Dorsolateral prefrontal cortex (tissue), 120 donors: ENCODE measurements at regions of chr5 and their contacts with region 1.

Region 1: GRCh38 chr5:176447982-176448608 is at the start of gene FAF2:
- DNase-seq: peak; percentile 90 to 96 (median 94)
- H3K4me3 ChIP-seq: peak within 1 kb of the TSS; percentile 62 to 99 (median 93)
- H3K27ac ChIP-seq: peak within 1 kb of the TSS; percentile 68 to 98 (median 95)
- H3K27me3 ChIP-seq: no peaks in the 10 kb centered on the region
- CTCF ChIP-seq: peak; percentile 78 to 100 (median 97)
- total RNA-seq, gene FAF2: 23.5 to 42.0 (median 33.9) TPM

Region 2: GRCh38 chr5:176361437-176362232 is 86.5 kb before region 1 on chr5 and contains the start of gene KIAA1191:
- intact Hi-C with region 1: loop called in 1 of 2 experiments (anchors 2 kb)
- DNase-seq: peak; percentile 90 to 97 (median 95)
- H3K4me3 ChIP-seq: peak within 1 kb of the TSS; percentile 73 to 100 (median 95)
- H3K27ac ChIP-seq: peak within 1 kb of the TSS; percentile 15 to 93 (median 82)
- H3K27me3 ChIP-seq: no peaks in the 10 kb centered on the region
- CTCF ChIP-seq: peak in 52 of 56 donors; percentile 14 to 66 (median 43)
- total RNA-seq, gene KIAA1191: 94.9 to 173 (median 136) TPM

Region 3: GRCh38 chr5:176388444-176389134 is 59.5 kb before region 1 on chr5 and contains the starts of genes HIGD2A and NOP16:
- intact Hi-C with region 1: loop called in 1 of 2 experiments (anchors 2 kb)
- DNase-seq: peak; percentile 93 to 99 (median 98)
- H3K4me3 ChIP-seq: peak within 1 kb of the TSS; percentile 61 to 99 (median 88)
- H3K27ac ChIP-seq: peak within 1 kb of the TSS; percentile 76 to 99 (median 96)
- H3K27me3 ChIP-seq: no peaks in the 10 kb centered on the region
- CTCF ChIP-seq: peak in 23 of 56 donors; percentile 2 to 43 (median 22)
- total RNA-seq, gene HIGD2A: 58.3 to 114 (median 80.1) TPM
- total RNA-seq, gene NOP16: 7.6 to 21.5 (median 13.1) TPM

Region 4: DNA sequence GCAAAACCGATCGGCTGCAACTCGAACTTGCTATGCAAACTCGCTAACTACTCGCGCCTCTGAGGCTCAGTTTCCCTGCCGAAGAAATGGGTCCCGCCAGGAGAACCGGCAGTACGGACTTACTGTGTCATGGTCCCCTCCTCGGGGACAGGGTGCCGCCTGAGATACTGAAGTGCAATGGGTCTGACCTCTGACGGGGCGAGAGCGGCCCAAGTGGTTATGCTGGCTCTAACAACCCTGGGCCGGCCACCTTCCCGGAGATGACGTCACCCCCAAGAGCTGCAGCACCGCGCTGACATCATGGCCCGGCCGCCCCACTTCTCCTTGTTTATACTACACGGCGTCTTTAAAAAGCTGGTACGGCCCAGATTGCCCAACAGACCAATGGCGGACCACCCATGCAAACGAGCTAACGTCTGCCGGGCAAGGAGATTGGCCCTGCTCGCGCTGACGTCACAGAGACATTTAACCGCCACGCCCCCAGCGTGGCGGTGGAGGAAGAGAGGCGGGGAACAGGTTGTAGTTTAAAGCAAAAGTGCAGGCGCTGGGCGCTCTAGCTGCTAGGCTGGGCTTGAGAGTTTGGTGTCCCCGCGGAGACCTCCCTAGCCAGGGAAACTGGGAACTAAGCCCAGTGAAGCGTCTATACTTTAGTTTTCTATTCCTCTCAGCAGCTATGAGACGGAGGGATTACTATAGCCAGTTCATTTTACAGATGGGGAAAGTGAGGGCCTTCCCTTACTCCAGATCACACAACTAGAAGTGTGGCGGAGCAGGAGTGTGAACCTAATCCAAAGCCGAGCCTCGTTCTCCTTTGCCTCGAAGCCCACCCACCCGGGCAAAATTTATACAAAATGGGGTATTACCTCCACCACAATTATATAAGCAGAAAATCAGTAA is 89.8 kb after region 1 on chr5:
- intact Hi-C with region 1: loop called (anchors 1 to 2 kb)
- DNase-seq: peak; percentile 98 to 100 (median 100)
- H3K4me3 ChIP-seq: peak overlapping the region; percentile 72 to 100 (median 92)
- H3K27ac ChIP-seq: peak overlapping the region; percentile 74 to 100 (median 98)
- H3K27me3 ChIP-seq: no peaks in the 10 kb centered on the region
- CTCF ChIP-seq: peak in 10 of 56 donors; percentile 12 to 38 (median 14)

Region 5: DNA sequence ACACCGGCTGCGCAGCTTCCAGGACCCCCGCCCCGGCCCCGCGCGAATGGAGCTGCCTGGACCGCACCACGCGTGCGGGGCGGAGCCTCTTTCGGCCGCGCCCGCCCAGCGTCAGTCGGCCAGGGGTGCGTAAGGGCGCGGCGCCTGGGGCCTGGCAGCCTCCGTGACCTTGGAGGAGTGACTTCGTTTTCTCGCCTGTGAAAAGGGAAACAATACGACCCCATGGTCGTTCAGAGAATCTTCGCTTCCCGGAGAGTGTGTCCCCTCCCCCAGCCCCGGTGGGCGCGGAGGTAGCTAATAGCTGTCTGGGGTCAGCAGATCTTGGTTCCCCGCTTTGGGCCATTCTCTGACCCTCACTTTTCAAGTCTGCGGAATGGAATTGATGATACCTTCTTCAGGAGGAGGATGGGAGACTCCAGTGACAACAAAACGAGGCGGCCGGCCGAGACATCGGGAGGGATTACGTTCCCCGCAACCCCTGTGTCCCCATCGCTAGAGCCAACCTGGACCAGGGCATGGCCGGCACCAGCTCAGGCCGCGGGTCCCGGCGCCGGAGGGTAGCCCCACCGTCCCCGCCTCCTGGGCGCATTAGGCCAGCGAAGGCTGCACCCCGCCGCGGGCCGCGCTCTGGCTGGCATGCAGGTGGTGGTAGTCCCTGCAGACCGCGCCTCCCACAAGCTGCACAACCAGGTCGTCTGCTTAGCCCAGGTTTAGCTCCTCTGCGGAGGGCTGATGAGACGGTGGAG is 95.5 kb after region 1 on chr5:
- intact Hi-C with region 1: loop called in 1 of 2 experiments (anchors 2 kb)
- DNase-seq: peak in 7 of 10 donors; percentile 53 to 81 (median 61)
- H3K4me3 ChIP-seq: peak overlapping the region; percentile 54 to 85 (median 75)
- H3K27ac ChIP-seq: peak overlapping the region in 58 of 59 donors; percentile 20 to 93 (median 80)
- H3K27me3 ChIP-seq: no peaks in the 10 kb centered on the region
- CTCF ChIP-seq: no peak

Region 6: GRCh38 chr5:176647030-176647866 is 199.2 kb after region 1 on chr5 and contains the start of gene TSPAN17:
- intact Hi-C with region 1: loop called in 1 of 2 experiments (anchors 10 kb)
- DNase-seq: peak; percentile 99 to 100 (median 100)
- H3K4me3 ChIP-seq: peak within 1 kb of the TSS; percentile 66 to 91 (median 80)
- H3K27ac ChIP-seq: peak within 1 kb of the TSS in 55 of 59 donors; percentile 39 to 90 (median 80)
- H3K27me3 ChIP-seq: no peaks in the 10 kb centered on the region
- CTCF ChIP-seq: peak in 54 of 56 donors; percentile 18 to 71 (median 47)
- total RNA-seq, gene TSPAN17: 13.7 to 59.5 (median 32.9) TPM